Heart left ventricle (tissue), 16 donors: ENCODE measurements at regions of chr6 and their contacts with region 1.

Region 1: GRCh38 chr6:55445648-55446204 is 118.5 kb downstream of the GFRAL start:
- DNase-seq: no peak
- ATAC-seq: no peak
- H3K4me3 ChIP-seq: no peak overlapping the region
- H3K27ac ChIP-seq: no peak overlapping the region
- H3K4me1 ChIP-seq: peaks cover 0 to 12% (median 0%) of the 10 kb centered on the region in 12 donors
- H3K27me3 ChIP-seq: no peaks in the 10 kb centered on the region
- CTCF ChIP-seq: peak; percentile 27 to 65 (median 53)
- POLR2A ChIP-seq: no peak

Region 2: GRCh38 chr6:55276745-55277530 is 168.8 kb before region 1 on chr6:
- intact Hi-C with region 1: loop called in 3 of 10 experiments (anchors 5 to 10 kb)
- DNase-seq: peak in 4 of 5 donors; percentile 25 to 51 (median 34)
- ATAC-seq: peak; percentile 50 to 92 (median 58)
- H3K4me3 ChIP-seq: peak overlapping the region in 7 of 12 donors; percentile 13 to 39 (median 22)
- H3K27ac ChIP-seq: peak overlapping the region in 5 of 12 donors; percentile 4 to 50 (median 41)
- H3K4me1 ChIP-seq: peaks cover 0 to 6% (median 0%) of the 10 kb centered on the region in 12 donors
- H3K27me3 ChIP-seq: no peaks in the 10 kb centered on the region
- CTCF ChIP-seq: peak; percentile 36 to 68 (median 54)
- POLR2A ChIP-seq: no peak

Region 3: GRCh38 chr6:55578537-55579363 is 133.0 kb after region 1 on chr6 and contains the start of gene HMGCLL1:
- intact Hi-C with region 1: loop called in 1 of 10 experiments (anchors 10 kb)
- DNase-seq: peak; percentile 37 to 77 (median 54)
- ATAC-seq: peak; percentile 77 to 89 (median 86)
- H3K4me3 ChIP-seq: peak within 1 kb of the TSS; percentile 19 to 67 (median 55)
- H3K27ac ChIP-seq: peak within 1 kb of the TSS; percentile 33 to 78 (median 58)
- H3K4me1 ChIP-seq: peaks cover 0 to 6% (median 0%) of the 10 kb centered on the region in 12 donors
- H3K27me3 ChIP-seq: peaks cover 0 to 7% (median 0%) of the 10 kb centered on the region in 9 donors
- CTCF ChIP-seq: peak in 1 of 12 donors; percentile 18
- POLR2A ChIP-seq: no peak
- total RNA-seq, gene HMGCLL1: 0.44 to 1.6 (median 0.89) TPM

Region 4: DNA sequence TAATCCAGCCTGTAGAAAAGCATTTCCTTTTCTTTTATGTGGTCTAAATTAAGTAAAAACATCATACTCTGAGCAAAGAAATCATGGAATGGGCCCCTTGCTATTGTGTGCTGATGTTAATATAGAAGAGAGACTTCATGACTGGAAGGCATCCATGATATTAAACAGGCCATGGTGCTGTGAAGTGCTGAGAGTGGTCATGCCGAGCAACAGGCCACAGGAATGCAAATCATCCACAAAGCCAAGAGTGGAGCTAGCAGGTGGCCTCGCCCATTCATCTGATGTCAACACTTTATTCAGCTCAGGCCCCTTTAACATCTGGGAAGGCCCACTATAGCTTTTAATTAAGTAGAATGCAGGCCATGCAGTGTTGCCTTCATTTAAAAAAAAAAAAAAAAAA is 248.4 kb after region 1 on chr6:
- intact Hi-C with region 1: no loop called
- DNase-seq: peak in 4 of 5 donors; percentile 28 to 56 (median 32)
- ATAC-seq: peak; percentile 83 to 97 (median 92)
- H3K4me3 ChIP-seq: no peak overlapping the region
- H3K27ac ChIP-seq: no peak overlapping the region
- H3K4me1 ChIP-seq: no peaks in the 10 kb centered on the region
- H3K27me3 ChIP-seq: no peaks in the 10 kb centered on the region
- CTCF ChIP-seq: no peak
- POLR2A ChIP-seq: no peak

Region 5: GRCh38 chr6:55886185-55886836 is 440.6 kb after region 1 on chr6:
- intact Hi-C with region 1: loop called (anchors 2 to 10 kb)
- DNase-seq: no peak
- ATAC-seq: no peak
- H3K4me3 ChIP-seq: no peak overlapping the region
- H3K27ac ChIP-seq: no peak overlapping the region
- H3K4me1 ChIP-seq: peaks cover 0 to 5% (median 0%) of the 10 kb centered on the region in 12 donors
- H3K27me3 ChIP-seq: no peaks in the 10 kb centered on the region
- CTCF ChIP-seq: peak in 11 of 12 donors; percentile 19 to 61 (median 40)
- POLR2A ChIP-seq: no peak

Region 6: DNA sequence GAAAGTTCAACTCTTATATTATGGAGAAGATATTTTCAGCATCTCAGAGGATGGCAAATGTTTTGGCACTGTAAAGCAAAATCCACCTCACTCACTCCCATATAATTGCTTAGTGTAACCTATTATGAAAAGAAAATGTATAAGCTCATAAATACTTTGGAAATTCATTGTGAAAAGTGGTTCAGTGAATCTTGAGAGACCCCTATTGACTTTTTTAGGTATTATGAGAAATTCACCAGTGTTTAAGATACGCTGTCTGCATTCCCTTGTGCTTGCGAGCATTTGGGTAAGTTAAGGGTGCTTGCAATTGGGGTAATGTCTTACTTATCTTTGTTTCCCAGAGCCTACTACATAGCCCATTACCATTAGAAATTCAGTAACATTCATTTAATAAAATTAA is 496.0 kb after region 1 on chr6:
- intact Hi-C with region 1: loop called in 1 of 10 experiments (anchors 10 kb)
- DNase-seq: no peak
- ATAC-seq: no peak
- H3K4me3 ChIP-seq: no peak overlapping the region
- H3K27ac ChIP-seq: no peak overlapping the region
- H3K4me1 ChIP-seq: no peaks in the 10 kb centered on the region
- H3K27me3 ChIP-seq: no peaks in the 10 kb centered on the region
- CTCF ChIP-seq: peak in 5 of 12 donors; percentile 13 to 41 (median 29)
- POLR2A ChIP-seq: no peak

Region 7: DNA sequence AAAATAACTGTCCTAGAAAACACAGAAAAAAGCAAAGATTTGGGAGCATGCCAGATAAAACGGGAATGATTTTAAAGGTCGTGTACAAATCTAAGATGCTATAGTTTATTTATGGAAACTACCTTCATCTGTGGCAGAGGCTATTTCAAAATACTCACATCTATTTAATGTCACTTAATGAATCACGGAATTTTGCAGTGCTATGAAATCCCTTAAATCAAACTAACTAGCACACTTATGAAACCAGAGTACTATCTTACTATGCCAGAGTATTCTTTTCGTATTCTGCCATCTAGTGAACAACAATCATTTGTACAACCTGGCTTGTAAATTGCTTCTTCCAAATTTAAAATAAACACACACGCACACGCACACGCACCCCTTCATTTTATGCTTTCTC is 507.6 kb after region 1 on chr6:
- intact Hi-C with region 1: loop called (anchors 2 to 10 kb)
- DNase-seq: no peak
- ATAC-seq: peak in 3 of 4 donors; percentile 33 to 67 (median 45)
- H3K4me3 ChIP-seq: peak overlapping the region in 9 of 12 donors; percentile 14 to 50 (median 26)
- H3K27ac ChIP-seq: no peak overlapping the region
- H3K4me1 ChIP-seq: peaks cover 0 to 6% (median 0%) of the 10 kb centered on the region in 12 donors
- H3K27me3 ChIP-seq: no peaks in the 10 kb centered on the region
- CTCF ChIP-seq: peak in 11 of 12 donors; percentile 11 to 58 (median 45)
- POLR2A ChIP-seq: no peak

Region 8: DNA sequence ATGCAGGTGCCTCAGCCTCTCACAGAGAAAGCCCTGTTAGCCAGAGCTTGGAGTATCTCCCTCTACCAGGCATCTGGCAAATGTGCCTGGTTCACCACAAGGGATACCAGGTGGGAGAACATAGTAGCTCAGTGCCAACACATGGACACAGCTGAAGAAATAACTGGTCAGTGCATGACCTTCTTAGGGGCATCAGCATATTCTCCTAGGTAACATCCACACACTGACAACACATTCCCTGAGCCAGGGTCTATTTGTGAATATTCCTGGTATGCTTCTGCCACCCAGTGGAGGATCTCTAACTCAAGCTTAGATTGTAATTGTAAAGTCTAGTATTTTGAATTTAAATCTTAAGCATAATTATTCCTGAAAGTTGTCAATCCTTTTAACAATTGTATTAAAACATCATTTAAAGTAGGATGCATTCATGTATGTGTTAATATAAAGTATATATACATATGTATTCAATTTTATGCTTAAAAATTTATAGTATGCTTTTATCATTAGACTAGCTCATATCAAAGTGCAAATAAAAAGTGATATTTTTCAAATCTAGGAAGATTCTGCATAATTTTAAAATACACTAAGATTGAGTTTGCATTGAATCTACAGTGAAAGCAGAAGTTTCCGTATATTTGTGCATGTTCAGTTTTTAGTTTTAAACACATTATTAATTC is 846.9 kb after region 1 on chr6:
- intact Hi-C with region 1: loop called in 3 of 10 experiments (anchors 5 to 10 kb)
- DNase-seq: peak in 2 of 5 donors; percentile 19 to 41
- ATAC-seq: peak; percentile 83 to 93 (median 90)
- H3K4me3 ChIP-seq: no peak overlapping the region
- H3K27ac ChIP-seq: no peak overlapping the region
- H3K4me1 ChIP-seq: peaks cover 0 to 7% (median 3%) of the 10 kb centered on the region in 12 donors
- H3K27me3 ChIP-seq: no peaks in the 10 kb centered on the region
- CTCF ChIP-seq: peak; percentile 38 to 77 (median 67)
- POLR2A ChIP-seq: no peak